ENCODE measurements at regions of chr16 and their contacts with region 1.

Region 1: DNA sequence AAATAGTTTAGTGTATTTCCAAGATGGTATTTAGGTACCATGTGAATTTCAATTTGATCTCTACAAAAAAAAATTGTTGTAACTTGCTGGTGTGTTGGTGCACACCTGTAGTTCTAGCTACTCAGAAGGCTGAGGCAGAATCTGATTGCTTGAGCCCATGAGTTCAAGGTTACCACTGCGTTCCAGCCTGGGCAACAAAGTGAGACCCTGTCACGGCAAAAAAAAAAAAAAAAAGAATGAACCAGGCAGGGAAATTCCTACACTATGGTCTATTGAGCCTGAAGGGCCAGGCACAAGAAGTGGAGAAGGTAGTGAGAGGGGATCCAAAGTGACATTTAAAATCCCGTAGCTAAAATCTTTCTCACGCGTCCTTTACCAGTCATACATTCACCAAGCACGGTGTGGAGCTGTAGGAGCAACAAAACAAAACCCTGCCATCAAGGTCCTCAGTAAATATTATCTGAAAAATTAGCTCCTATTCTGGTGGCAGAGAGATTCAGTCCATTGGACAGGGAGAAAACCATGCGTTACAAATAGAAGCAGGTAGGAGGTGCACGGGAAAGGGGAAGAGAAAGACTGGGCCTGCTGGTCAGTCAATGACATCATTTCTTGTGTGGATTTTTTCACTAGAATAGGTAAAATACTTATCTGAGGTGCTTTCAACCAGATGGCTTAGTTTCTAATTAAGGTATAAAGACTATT is 27.3 kb downstream of the TXNDC11 start:
- DNase-seq: no peak
- ATAC-seq: no peak
- H3K4me3 ChIP-seq: no peak overlapping the region
- H3K4me3 Mint-ChIP-seq: no peak overlapping the region
- H3K27ac ChIP-seq: no peak overlapping the region
- H3K27ac Mint-ChIP-seq: peak overlapping the region; percentile 42
- H3K4me1 ChIP-seq: peaks cover 0 to 7% of the 10 kb centered on the region in 2 donors
- H3K4me1 Mint-ChIP-seq: peaks cover 25% of the 10 kb centered on the region
- H3K27me3 ChIP-seq: no peaks in the 10 kb centered on the region
- H3K27me3 Mint-ChIP-seq: no peaks in the 10 kb centered on the region
- CTCF ChIP-seq: no peak

Region 2: GRCh38 chr16:11396241-11397048 is 319.0 kb before region 1 on chr16:
- CTCF ChIA-PET with region 1: interaction called, 18 read pairs
- POLR2A ChIA-PET with region 1: no interaction called
- intact Hi-C with region 1: loop called (anchors 1 kb)
- DNase-seq: peak; percentile 76
- ATAC-seq: peak; percentile 79
- H3K4me3 ChIP-seq: no peak overlapping the region
- H3K4me3 Mint-ChIP-seq: no peak overlapping the region
- H3K27ac ChIP-seq: no peak overlapping the region
- H3K27ac Mint-ChIP-seq: no peak overlapping the region
- H3K4me1 ChIP-seq: peaks cover 0 to 6% of the 10 kb centered on the region in 2 donors
- H3K4me1 Mint-ChIP-seq: peaks cover 8% of the 10 kb centered on the region
- H3K27me3 ChIP-seq: peaks cover 0 to 3% (median 1%) of the 10 kb centered on the region in 4 experiments
- H3K27me3 Mint-ChIP-seq: no peaks in the 10 kb centered on the region
- CTCF ChIP-seq: peak; percentile 99

Region 3: DNA sequence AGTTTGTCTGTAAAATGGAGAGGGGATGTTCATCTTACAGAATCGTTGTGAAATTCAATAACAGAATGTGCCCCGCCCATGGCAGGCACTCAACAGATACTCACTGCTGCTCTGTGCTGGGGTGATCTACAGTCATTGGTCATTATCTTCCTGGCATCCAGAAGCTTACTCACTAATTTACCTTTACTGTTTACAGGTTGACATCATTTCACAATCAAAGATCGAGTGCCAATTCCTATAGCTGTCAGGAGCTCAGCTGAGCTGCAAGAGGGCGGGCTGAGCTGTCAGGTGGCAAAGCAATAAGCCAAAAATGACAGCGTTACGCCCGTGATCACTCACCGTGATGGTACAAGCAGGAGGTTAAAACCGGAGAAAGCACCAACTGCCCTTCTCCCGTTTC is 179.9 kb before region 1 on chr16:
- CTCF ChIA-PET with region 1: interaction called, 126 read pairs
- POLR2A ChIA-PET with region 1: interaction called, 10 read pairs
- intact Hi-C with region 1: loop called (anchors 1 kb)
- DNase-seq: no peak
- ATAC-seq: no peak
- H3K4me3 ChIP-seq: no peak overlapping the region
- H3K4me3 Mint-ChIP-seq: no peak overlapping the region
- H3K27ac ChIP-seq: no peak overlapping the region
- H3K27ac Mint-ChIP-seq: no peak overlapping the region
- H3K4me1 ChIP-seq: no peaks in the 10 kb centered on the region
- H3K4me1 Mint-ChIP-seq: peaks cover 5% of the 10 kb centered on the region
- H3K27me3 ChIP-seq: no peaks in the 10 kb centered on the region
- H3K27me3 Mint-ChIP-seq: no peaks in the 10 kb centered on the region
- CTCF ChIP-seq: no peak

Region 4: GRCh38 chr16:11675561-11676511 is 39.6 kb before region 1 on chr16:
- CTCF ChIA-PET with region 1: interaction called, 15 read pairs
- POLR2A ChIA-PET with region 1: no interaction called
- intact Hi-C with region 1: loop called (anchors 5 kb)
- DNase-seq: no peak
- ATAC-seq: no peak
- H3K4me3 ChIP-seq: no peak overlapping the region
- H3K4me3 Mint-ChIP-seq: peak overlapping the region; percentile 87
- H3K27ac ChIP-seq: peak overlapping the region; percentile 62 to 99
- H3K27ac Mint-ChIP-seq: peak overlapping the region; percentile 32
- H3K4me1 ChIP-seq: peaks cover 93 to 100% of the 10 kb centered on the region in 2 donors
- H3K4me1 Mint-ChIP-seq: peaks cover 98% of the 10 kb centered on the region
- H3K27me3 ChIP-seq: no peaks in the 10 kb centered on the region
- H3K27me3 Mint-ChIP-seq: no peaks in the 10 kb centered on the region
- CTCF ChIP-seq: no peak

Region 5: GRCh38 chr16:11698271-11698689 is 17.1 kb before region 1 on chr16:
- CTCF ChIA-PET with region 1: interaction called, 17 read pairs
- POLR2A ChIA-PET with region 1: interaction called, 7 read pairs
- intact Hi-C with region 1: no loop called
- DNase-seq: no peak
- ATAC-seq: peak; percentile 41
- H3K4me3 ChIP-seq: no peak overlapping the region
- H3K4me3 Mint-ChIP-seq: no peak overlapping the region
- H3K27ac ChIP-seq: no peak overlapping the region
- H3K27ac Mint-ChIP-seq: peak overlapping the region; percentile 59
- H3K4me1 ChIP-seq: peaks cover 3 to 9% of the 10 kb centered on the region in 2 donors
- H3K4me1 Mint-ChIP-seq: peaks cover 21% of the 10 kb centered on the region
- H3K27me3 ChIP-seq: no peaks in the 10 kb centered on the region
- H3K27me3 Mint-ChIP-seq: no peaks in the 10 kb centered on the region
- CTCF ChIP-seq: no peak

Region 6: GRCh38 chr16:11806721-11807120 is 91.3 kb after region 1 on chr16:
- CTCF ChIA-PET with region 1: interaction called, 16 read pairs
- POLR2A ChIA-PET with region 1: interaction called, 3 read pairs
- intact Hi-C with region 1: no loop called
- DNase-seq: no peak
- ATAC-seq: no peak
- H3K4me3 ChIP-seq: no peak overlapping the region
- H3K4me3 Mint-ChIP-seq: no peak overlapping the region
- H3K27ac ChIP-seq: no peak overlapping the region
- H3K27ac Mint-ChIP-seq: no peak overlapping the region
- H3K4me1 ChIP-seq: peaks cover 0 to 16% of the 10 kb centered on the region in 2 donors
- H3K4me1 Mint-ChIP-seq: peaks cover 8% of the 10 kb centered on the region
- H3K27me3 ChIP-seq: no peaks in the 10 kb centered on the region
- H3K27me3 Mint-ChIP-seq: no peaks in the 10 kb centered on the region
- CTCF ChIP-seq: no peak

Measured in B cell (primary cell).